Ovary (tissue), 10 donors: ENCODE measurements at regions of chr1 and their contacts with region 1.

Region 1: GRCh38 chr1:172449585-172450534 is 6.0 kb upstream of the PIGC start:
- DNase-seq: peak; percentile 28 to 67 (median 45)
- H3K4me3 ChIP-seq: no peak overlapping the region
- H3K27ac ChIP-seq: no peak overlapping the region
- H3K4me1 ChIP-seq: no peaks in the 10 kb centered on the region
- H3K27me3 ChIP-seq: no peaks in the 10 kb centered on the region
- CTCF ChIP-seq: peak; percentile 46 to 73 (median 59)
- EP300 ChIP-seq: no peak
- POLR2A ChIP-seq: no peak

Region 2: DNA sequence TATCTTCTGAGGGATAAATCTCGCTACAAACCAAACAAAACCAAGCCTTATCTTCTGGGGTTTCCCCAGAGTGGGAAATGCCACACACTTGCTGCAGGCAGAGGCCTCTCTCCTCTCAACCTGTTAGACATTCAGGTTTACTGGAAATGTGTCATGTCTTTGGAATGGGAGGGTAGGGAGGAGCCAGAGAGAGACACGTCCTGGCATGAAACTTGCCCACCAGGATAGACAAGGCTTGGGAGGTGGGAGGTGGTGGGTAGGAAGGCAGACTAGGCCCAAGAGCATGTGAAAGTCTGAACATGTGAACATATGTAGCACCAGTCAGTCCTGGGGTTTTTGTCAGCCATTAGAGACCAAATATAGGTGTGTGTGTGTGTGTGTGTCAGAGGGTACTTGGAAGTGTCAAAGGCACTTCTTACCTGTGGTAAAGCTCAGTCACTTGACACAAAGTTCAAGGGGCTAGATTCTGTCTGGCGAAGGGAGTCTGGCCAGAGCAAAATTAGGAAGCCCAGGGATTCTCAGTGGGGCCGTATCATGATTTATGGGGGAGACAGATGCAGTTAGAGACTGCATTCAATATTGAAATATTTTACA is 26.5 kb after region 1 on chr1:
- intact Hi-C with region 1: no loop called
- DNase-seq: no peak
- H3K4me3 ChIP-seq: no peak overlapping the region
- H3K27ac ChIP-seq: no peak overlapping the region
- H3K4me1 ChIP-seq: no peaks in the 10 kb centered on the region
- H3K27me3 ChIP-seq: no peaks in the 10 kb centered on the region
- CTCF ChIP-seq: no peak
- EP300 ChIP-seq: no peak
- POLR2A ChIP-seq: no peak

Region 3: GRCh38 chr1:172719694-172720138 is 269.9 kb after region 1 on chr1:
- intact Hi-C with region 1: loop called in 2 of 4 experiments (anchors 10 kb)
- DNase-seq: no peak
- H3K4me3 ChIP-seq: no peak overlapping the region
- H3K27ac ChIP-seq: no peak overlapping the region
- H3K4me1 ChIP-seq: no peaks in the 10 kb centered on the region
- H3K27me3 ChIP-seq: no peaks in the 10 kb centered on the region
- CTCF ChIP-seq: peak in 1 of 3 donors; percentile 31
- EP300 ChIP-seq: no peak
- POLR2A ChIP-seq: no peak

Region 4: DNA sequence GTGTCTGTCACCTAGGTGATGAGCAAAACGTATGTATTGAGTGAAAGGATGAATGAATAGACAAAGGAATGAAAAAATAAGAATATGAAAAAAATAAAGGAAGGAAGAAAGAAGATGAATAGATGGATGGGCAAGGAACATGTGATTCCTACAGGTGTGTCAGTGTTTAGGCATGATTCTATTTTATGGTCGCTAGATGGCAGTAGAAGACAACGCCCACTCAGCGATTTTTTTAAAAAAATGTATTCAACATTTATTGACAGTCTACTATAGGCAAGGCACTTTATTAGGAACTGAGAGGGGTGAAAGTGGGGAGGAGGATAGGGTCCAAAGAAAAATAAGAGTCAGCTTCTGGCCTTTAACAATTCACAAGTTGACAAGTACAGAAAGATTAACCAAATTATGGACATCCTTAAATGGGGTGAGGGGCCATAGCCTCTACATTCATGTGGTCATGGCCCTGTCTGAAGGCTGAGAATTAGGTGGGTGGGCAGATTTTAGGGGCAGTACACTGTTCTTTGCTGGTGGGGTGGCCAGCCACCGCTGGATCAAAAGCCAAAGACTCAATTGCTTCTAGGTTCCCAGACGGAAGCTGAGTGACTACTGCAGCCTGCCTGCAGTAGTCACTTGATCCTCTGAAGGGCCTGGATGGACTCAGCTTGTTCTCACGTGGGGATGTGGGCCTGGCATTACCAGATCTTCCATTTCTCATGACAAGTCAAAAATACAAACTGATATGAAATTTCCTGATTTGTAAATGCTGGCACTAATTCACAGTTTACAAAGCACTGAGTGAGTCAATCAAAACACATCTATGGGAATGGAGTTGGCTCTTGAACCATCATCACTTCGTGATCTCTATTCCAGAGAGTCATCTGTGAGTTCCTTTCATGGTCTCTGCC is 293.0 kb after region 1 on chr1:
- intact Hi-C with region 1: no loop called
- DNase-seq: no peak
- H3K4me3 ChIP-seq: no peak overlapping the region
- H3K27ac ChIP-seq: no peak overlapping the region
- H3K4me1 ChIP-seq: peaks cover 3% of the 10 kb centered on the region
- H3K27me3 ChIP-seq: no peaks in the 10 kb centered on the region
- CTCF ChIP-seq: peak in 1 of 3 donors; percentile 46
- EP300 ChIP-seq: no peak
- POLR2A ChIP-seq: no peak